HEK293T (cell line): ENCODE measurements at regions of chr4 and their contacts with region 1.

Region 1: DNA sequence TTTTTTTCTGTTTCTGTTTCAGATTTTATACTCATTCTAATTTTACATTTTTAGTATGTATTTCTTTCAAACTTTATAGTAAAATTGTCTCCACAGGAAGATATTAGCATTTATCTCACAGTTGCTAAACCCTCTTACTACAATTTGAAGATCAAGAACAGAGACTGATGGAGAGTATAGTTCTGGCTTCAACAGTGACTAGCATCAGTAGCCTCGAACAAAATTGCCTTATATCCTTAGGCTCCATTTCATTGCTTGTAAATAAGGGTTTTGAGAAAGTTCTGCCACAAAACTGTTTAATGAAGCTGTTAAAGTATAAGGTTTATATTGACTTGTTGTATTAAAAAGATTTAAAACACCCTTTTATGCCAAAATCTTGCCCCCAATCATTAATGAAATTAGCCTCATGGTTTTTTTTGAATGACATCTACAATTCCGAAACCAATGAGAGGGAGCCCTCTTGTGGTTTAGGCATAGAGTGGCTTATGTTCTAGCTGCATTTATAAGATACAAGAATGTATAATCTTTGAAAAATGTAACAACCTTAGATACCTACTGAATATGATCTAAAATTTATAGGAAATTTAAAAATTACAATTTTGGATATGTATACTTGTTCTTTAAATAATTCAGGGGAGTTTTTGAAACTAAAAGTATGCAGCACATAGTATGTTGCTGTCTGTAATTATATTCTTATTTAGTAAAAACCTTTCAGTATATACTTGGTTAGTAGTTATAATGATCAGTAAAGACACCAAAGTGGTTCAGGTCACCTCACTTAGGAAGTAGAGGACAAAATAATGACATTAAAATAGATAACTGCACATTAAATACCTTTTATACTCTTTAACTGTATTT is 109.8 kb upstream of the HPGD start:
- DNase-seq: peak; percentile 39

Region 2: GRCh38 chr4:174613979-174614378 is 18.2 kb before region 1 on chr4:
- CTCF ChIA-PET with region 1: interaction called, 15 read pairs
- POLR2A ChIA-PET with region 1: no interaction called
- DNase-seq: no peak